ENCODE measurements at regions of chr22 and their contacts with region 1.

Region 1: GRCh38 chr22:43036282-43036829 is 21.4 kb upstream of the PACSIN2 start:
- DNase-seq: no peak
- H3K4me3 ChIP-seq: no peak overlapping the region
- H3K27ac ChIP-seq: no peak overlapping the region
- H3K4me1 ChIP-seq: no peaks in the 10 kb centered on the region; a peak in 2 of 7 replicates
- H3K27me3 ChIP-seq: no peaks in the 10 kb centered on the region
- CTCF ChIP-seq: no peak
- EP300 ChIP-seq: no peak
- POLR2A ChIP-seq: no peak
- RAD21 ChIP-seq: no peak

Region 2: GRCh38 chr22:42880815-42881214 is 155.5 kb before region 1 on chr22:
- CTCF ChIA-PET with region 1: interaction called, 10 read pairs
- POLR2A ChIA-PET with region 1: no interaction called
- DNase-seq: no peak
- H3K4me3 ChIP-seq: no peak overlapping the region
- H3K27ac ChIP-seq: no peak overlapping the region
- H3K4me1 ChIP-seq: peaks cover 0 to 7% (median 4%) of the 10 kb centered on the region in 4 experiments; a peak in 6 of 7 replicates
- H3K27me3 ChIP-seq: no peaks in the 10 kb centered on the region
- CTCF ChIP-seq: peak; percentile 50 to 72 (median 66)
- EP300 ChIP-seq: no peak
- POLR2A ChIP-seq: no peak
- RAD21 ChIP-seq: peak; percentile 35 to 52

Region 3: GRCh38 chr22:42930810-42931420 is 105.4 kb before region 1 on chr22:
- CTCF ChIA-PET with region 1: interaction called, 10 read pairs
- POLR2A ChIA-PET with region 1: no interaction called
- DNase-seq: no peak
- H3K4me3 ChIP-seq: no peak overlapping the region
- H3K27ac ChIP-seq: no peak overlapping the region
- H3K4me1 ChIP-seq: peaks cover 0 to 3% (median 0%) of the 10 kb centered on the region in 4 experiments; a peak in 3 of 7 replicates
- H3K27me3 ChIP-seq: no peaks in the 10 kb centered on the region
- CTCF ChIP-seq: peak in 2 of 3 experiments; percentile 17 to 19; a peak in 2 of 4 replicates
- EP300 ChIP-seq: no peak
- POLR2A ChIP-seq: no peak
- RAD21 ChIP-seq: peak; percentile 21 to 46; a peak in 3 of 4 replicates

Region 4: GRCh38 chr22:42964994-42965699 is 71.2 kb before region 1 on chr22:
- CTCF ChIA-PET with region 1: interaction called, 10 read pairs
- POLR2A ChIA-PET with region 1: no interaction called
- DNase-seq: no peak
- H3K4me3 ChIP-seq: peak overlapping the region in 1 of 4 experiments; percentile 36; a peak in 3 of 8 replicates
- H3K27ac ChIP-seq: no peak overlapping the region
- H3K4me1 ChIP-seq: peaks cover 12 to 26% (median 24%) of the 10 kb centered on the region in 4 experiments
- H3K27me3 ChIP-seq: no peaks in the 10 kb centered on the region
- CTCF ChIP-seq: no peak
- EP300 ChIP-seq: peak in 1 of 2 experiments; percentile 16; a peak in 1 of 3 replicates
- POLR2A ChIP-seq: no peak
- RAD21 ChIP-seq: no peak

Measured in H1 (cell line).